Activated CD4-positive, alpha-beta T cell treated with anti-CD3 and anti-CD28 coated beads for 36 hours (primary cell): ENCODE measurements at regions of chr14 and their contacts with region 1.

Region 1: DNA sequence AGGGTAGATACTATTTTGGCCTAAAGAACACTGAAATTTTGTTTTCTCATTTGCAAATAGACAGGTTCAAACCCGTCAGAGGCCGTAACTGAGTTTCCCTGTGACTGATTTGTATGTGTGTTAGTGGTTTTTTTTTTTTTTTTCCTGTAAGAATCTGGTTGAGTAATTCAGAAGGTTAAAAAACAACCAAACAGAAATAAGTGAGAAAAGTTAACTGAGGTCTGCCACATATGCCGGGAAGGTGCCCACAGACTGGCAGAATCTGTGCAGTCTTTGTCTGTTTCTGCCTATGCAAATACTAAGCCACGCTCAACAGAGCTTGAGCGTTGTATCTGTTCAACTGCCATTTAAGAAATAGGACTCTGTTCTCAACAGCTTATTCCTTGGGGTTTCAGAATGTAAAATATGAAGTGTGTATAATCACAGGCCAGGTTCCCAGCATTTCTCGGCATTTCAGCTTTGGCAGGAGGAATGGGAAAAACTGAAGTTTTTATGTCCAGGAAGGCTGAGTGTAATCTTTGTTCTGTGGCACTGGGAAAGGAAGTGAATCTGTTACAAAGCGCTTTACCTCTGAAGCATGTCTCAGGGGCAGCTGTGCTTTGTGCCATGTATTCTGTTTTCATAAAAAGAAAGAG is 181.9 kb downstream of the PRKCH start:
- DNase-seq: peak; percentile 90
- ATAC-seq: peak; percentile 80
- H3K4me3 Mint-ChIP-seq: peak overlapping the region; percentile 56
- H3K27ac Mint-ChIP-seq: peak overlapping the region; percentile 99
- H3K4me1 Mint-ChIP-seq: peaks cover 98% of the 10 kb centered on the region
- H3K27me3 Mint-ChIP-seq: no peaks in the 10 kb centered on the region

Region 2: DNA sequence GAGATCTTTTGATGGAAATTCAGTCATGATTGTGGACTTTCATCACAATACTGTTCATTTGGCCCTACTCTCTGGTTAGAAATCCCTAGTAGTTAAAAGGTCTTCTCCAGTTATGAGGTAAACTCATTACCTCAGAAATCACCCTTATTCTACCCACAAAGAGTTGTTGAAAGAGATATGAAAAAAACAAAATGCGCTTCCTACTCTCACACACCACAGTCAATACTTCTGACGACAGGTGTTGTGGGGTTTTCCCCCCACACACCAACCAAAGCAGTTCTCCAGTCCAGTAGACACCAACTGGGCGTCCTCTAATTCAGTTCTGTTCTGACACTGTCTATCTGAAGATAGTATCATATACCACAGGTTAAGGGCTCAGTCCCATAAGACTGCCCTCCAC is 577.3 kb before region 1 on chr14:
- CTCF ChIA-PET with region 1: no interaction called
- POLR2A ChIA-PET with region 1: no interaction called
- intact Hi-C with region 1: no loop called
- DNase-seq: no peak
- ATAC-seq: no peak
- H3K4me3 Mint-ChIP-seq: no peak overlapping the region
- H3K27ac Mint-ChIP-seq: no peak overlapping the region
- H3K4me1 Mint-ChIP-seq: no peaks in the 10 kb centered on the region
- H3K27me3 Mint-ChIP-seq: no peaks in the 10 kb centered on the region

Region 3: DNA sequence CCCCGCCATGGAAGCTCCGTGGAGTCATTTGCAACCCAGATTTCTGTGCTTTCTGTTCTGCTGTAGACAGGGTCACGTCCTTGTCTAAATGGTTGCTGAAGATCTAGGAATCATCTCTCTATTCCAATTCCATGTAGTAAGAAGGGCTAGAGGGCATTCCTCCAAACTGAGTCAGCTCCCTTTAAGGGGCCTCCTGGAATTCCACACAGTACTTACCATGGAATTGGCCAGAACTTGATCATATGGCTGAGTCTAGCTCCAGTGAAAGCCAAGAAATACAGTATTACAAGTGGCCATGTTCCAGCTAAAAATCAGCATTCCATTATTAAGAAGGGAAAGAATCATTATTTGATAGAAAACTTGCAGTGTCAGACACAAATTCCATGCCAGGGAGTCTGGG is 10.0 kb before region 1 on chr14:
- CTCF ChIA-PET with region 1: interaction called, 19 read pairs
- POLR2A ChIA-PET with region 1: no interaction called
- intact Hi-C with region 1: no loop called
- DNase-seq: no peak
- ATAC-seq: no peak
- H3K4me3 Mint-ChIP-seq: no peak overlapping the region
- H3K27ac Mint-ChIP-seq: no peak overlapping the region
- H3K4me1 Mint-ChIP-seq: peaks cover 57% of the 10 kb centered on the region
- H3K27me3 Mint-ChIP-seq: no peaks in the 10 kb centered on the region

Region 4: DNA sequence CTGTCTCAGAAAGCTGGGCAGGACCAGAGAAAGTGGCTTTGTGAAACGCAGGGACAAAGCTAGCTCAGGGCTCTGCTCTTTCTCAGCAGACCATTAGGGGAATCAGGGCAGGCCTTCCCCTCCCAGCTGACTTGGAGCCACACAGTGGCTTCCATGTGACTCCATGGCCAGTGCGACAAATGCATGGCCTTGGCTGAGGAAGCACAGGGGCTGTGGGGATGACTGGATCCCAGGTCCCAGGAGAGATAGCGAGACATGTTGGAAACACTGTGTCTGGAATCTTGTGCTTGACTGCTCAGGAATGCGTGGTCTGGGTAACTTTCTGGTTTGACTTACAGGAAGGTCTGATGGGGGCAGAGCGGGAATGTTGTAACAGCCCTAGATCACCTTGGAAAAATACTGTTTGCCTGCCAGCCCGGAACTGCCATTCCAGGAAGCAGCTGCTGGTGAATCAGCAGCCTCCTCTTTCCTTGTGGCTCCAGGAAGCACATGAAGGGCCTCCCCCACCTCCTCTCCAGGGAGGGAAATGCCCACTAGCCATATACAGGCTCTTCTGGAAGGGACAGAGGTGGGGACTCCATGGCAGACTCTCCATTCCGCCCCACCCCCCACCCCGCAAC is 58.5 kb after region 1 on chr14:
- CTCF ChIA-PET with region 1: interaction called, 6 read pairs
- POLR2A ChIA-PET with region 1: no interaction called
- intact Hi-C with region 1: loop called in 1 of 2 experiments (anchors 2 kb)
- DNase-seq: no peak
- ATAC-seq: no peak
- H3K4me3 Mint-ChIP-seq: no peak overlapping the region
- H3K27ac Mint-ChIP-seq: peak overlapping the region; percentile 81
- H3K4me1 Mint-ChIP-seq: peaks cover 62% of the 10 kb centered on the region
- H3K27me3 Mint-ChIP-seq: no peaks in the 10 kb centered on the region

Region 5: GRCh38 chr14:61588419-61588901 is 85.2 kb after region 1 on chr14:
- CTCF ChIA-PET with region 1: no interaction called
- POLR2A ChIA-PET with region 1: no interaction called
- intact Hi-C with region 1: no loop called
- DNase-seq: no peak
- ATAC-seq: no peak
- H3K4me3 Mint-ChIP-seq: no peak overlapping the region
- H3K27ac Mint-ChIP-seq: no peak overlapping the region
- H3K4me1 Mint-ChIP-seq: peaks cover 33% of the 10 kb centered on the region
- H3K27me3 Mint-ChIP-seq: no peaks in the 10 kb centered on the region

Region 6: GRCh38 chr14:61620130-61620946 is 117.1 kb after region 1 on chr14:
- CTCF ChIA-PET with region 1: interaction called, 4 read pairs
- POLR2A ChIA-PET with region 1: interaction called, 3 read pairs
- intact Hi-C with region 1: loop called (anchors 1 kb)
- DNase-seq: peak; percentile 82
- ATAC-seq: peak; percentile 91
- H3K4me3 Mint-ChIP-seq: no peak overlapping the region
- H3K27ac Mint-ChIP-seq: peak overlapping the region; percentile 81
- H3K4me1 Mint-ChIP-seq: peaks cover 79% of the 10 kb centered on the region
- H3K27me3 Mint-ChIP-seq: no peaks in the 10 kb centered on the region

Region 7: DNA sequence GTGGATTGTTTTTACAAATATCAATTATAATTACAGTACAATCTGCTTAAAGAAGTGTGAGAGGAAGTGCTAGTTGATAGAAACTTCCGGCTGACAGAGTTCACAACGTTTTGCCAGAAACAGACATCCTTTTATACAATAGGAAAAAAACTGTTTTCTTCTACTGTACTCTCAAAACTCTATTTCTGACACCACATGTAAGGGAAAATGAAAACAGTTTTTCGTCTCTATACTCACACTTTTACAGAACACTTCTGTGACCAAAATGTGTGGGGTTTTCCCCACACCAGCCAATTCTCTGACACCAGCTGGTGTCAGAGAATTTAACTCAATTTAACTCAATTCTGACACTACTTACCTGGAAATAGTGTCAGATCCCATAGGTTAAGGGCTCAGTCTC is 167.8 kb after region 1 on chr14:
- CTCF ChIA-PET with region 1: no interaction called
- POLR2A ChIA-PET with region 1: interaction called, 3 read pairs
- intact Hi-C with region 1: loop called in 1 of 2 experiments (anchors 2 kb)
- DNase-seq: peak; percentile 66
- ATAC-seq: peak; percentile 85
- H3K4me3 Mint-ChIP-seq: no peak overlapping the region
- H3K27ac Mint-ChIP-seq: no peak overlapping the region
- H3K4me1 Mint-ChIP-seq: peaks cover 25% of the 10 kb centered on the region
- H3K27me3 Mint-ChIP-seq: no peaks in the 10 kb centered on the region